Activated T-helper 2 cell treated with anti-CD3 and anti-CD28 coated beads, Interferon-gamma antibody, Interleukin-2, Interleukin-4, amounts not matched to agents 10 μg/mL and 5 μg/mL and 100 μg/mL, durations not matched to agents 14 hours and 24 hours and 36 hours (primary cell): ENCODE measurements at regions of chr14 and their contacts with region 1.

Region 1: GRCh38 chr14:93064411-93065323 is 51.1 kb downstream of the ITPK1 start:
- DNase-seq: no peak
- H3K4me3 Mint-ChIP-seq: no peak overlapping the region
- H3K27ac Mint-ChIP-seq: peak overlapping the region; percentile 84
- H3K4me1 Mint-ChIP-seq: peaks cover 51% of the 10 kb centered on the region
- H3K27me3 Mint-ChIP-seq: no peaks in the 10 kb centered on the region

Region 2: DNA sequence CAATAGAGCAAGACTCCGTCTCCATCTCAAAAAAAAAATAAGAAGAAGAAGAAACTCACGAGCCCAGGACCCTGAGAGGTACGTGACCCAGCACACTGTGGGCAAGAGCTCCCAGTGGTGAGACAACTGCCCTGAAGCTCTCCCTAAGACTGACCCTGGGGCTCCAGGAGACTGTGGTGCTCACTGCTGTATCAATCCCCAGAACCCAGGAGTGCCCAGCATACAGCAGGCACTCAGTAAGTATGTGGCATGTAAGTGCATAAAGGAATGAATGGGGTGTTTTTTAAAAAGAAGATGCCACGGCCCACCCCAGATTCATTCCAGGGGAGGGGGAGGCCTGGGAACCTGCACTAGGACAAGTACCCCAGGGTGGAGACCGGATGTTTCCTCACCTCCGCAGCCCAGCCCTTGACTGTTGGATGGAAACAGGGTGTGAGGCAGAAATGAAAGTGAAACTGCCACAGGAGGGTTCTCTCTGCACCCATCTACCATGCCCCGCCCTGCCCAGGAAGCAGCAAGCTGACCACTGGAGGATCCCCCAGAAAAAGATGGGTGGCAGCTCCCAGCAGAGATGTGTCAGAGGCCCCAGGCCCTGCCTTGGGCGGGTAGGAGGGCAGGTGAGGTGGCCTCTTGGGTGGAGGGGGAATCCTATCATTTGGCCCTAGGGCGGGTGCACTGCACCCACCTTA is 38.9 kb after region 1 on chr14:
- intact Hi-C with region 1: loop called (anchors 5 kb)
- DNase-seq: peak; percentile 83
- H3K4me3 Mint-ChIP-seq: peak overlapping the region; percentile 67
- H3K27ac Mint-ChIP-seq: peak overlapping the region; percentile 92
- H3K4me1 Mint-ChIP-seq: peaks cover 37% of the 10 kb centered on the region
- H3K27me3 Mint-ChIP-seq: no peaks in the 10 kb centered on the region